ENCODE measurements at regions of chr11 and their contacts with region 1.

Region 1: GRCh38 chr11:7442588-7443215 is 42.6 kb upstream of the OLFML1 start:
- DNase-seq: peak; percentile 82
- H3K4me3 Mint-ChIP-seq: no peak overlapping the region
- H3K27ac Mint-ChIP-seq: no peak overlapping the region
- H3K4me1 Mint-ChIP-seq: no peaks in the 10 kb centered on the region
- H3K27me3 Mint-ChIP-seq: peaks cover 66% of the 10 kb centered on the region
- CTCF ChIP-seq: peak; percentile 59

Region 2: DNA sequence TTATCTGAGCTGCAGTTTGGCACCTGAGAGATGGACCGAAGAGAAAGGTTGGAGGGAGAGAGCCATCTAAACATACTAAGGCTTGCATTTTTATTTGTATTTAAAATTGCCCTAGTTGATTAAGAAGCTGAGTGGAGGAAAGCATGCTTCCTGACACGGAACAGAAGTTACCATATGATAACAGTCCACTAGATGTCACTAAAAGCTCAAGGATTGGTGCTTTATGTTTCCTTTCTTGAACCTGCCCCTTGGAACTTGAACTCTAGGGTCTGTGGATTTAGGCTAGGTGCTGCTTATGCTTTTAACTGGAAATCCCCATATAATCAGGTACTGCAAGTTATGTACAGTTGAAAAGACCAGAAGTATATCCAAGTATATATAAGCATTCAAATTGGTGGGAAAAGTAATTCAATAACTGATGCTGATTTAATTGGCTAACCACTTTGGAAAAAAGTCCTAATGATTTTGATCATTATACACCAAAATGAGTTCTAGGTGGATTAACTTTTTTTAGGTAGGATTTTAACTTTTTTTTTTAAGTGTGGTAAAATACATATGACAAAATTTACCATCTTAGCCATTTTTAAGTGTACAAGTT is 344.4 kb before region 1 on chr11:
- CTCF ChIA-PET with region 1: interaction called, 5 read pairs
- intact Hi-C with region 1: loop called (anchors 1 kb)
- DNase-seq: peak; percentile 9
- H3K4me3 Mint-ChIP-seq: no peak overlapping the region
- H3K27ac Mint-ChIP-seq: no peak overlapping the region
- H3K4me1 Mint-ChIP-seq: no peaks in the 10 kb centered on the region
- H3K27me3 Mint-ChIP-seq: peaks cover 52% of the 10 kb centered on the region
- CTCF ChIP-seq: peak; percentile 54

Region 3: DNA sequence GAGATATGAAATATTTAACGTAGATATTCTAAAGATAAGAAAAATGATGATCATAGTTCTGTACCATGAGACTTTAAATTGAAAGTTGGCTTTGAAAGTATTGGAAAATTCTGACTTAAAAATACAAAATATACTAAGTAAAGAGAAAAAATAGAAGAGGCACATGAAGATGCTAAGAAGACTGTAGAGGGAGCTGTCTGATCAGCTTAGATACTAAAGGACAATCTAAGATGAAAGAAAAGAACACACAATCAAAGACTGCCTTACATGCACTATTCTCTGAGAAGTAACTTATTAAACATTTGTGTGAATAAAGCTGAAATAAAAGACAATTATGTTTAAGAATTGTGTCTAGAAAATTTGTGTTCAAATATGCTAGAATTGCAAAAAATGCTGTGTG is 298.8 kb before region 1 on chr11:
- CTCF ChIA-PET with region 1: no interaction called
- intact Hi-C with region 1: loop called (anchors 2 kb)
- DNase-seq: no peak
- H3K4me3 Mint-ChIP-seq: no peak overlapping the region
- H3K27ac Mint-ChIP-seq: no peak overlapping the region
- H3K4me1 Mint-ChIP-seq: no peaks in the 10 kb centered on the region
- H3K27me3 Mint-ChIP-seq: peaks cover 20% of the 10 kb centered on the region
- CTCF ChIP-seq: no peak

Region 4: DNA sequence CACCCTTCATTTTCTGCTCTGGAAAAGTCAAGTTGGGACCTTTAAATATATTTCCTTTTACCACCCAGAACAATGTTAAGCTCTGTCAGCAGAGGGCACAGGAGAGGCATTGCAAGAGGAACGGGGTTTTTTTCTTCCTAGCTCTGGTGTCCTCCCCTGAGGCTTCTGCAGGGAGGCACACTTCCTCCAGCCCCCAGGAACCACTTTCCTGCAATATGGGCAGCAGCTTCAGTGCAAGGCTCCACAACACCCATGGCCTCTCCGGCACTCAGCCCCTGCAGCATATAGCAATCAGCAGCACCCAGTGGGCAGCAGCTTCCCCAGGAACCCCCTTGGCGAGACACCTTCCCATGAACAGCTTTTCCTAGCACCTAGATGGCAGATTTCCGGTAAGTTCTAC is 89.6 kb before region 1 on chr11:
- CTCF ChIA-PET with region 1: interaction called, 16 read pairs
- intact Hi-C with region 1: loop called (anchors 1 kb)
- DNase-seq: peak; percentile 49
- H3K4me3 Mint-ChIP-seq: no peak overlapping the region
- H3K27ac Mint-ChIP-seq: no peak overlapping the region
- H3K4me1 Mint-ChIP-seq: no peaks in the 10 kb centered on the region
- H3K27me3 Mint-ChIP-seq: peaks cover 61% of the 10 kb centered on the region
- CTCF ChIP-seq: peak; percentile 65

Region 5: GRCh38 chr11:7513234-7514098 is 70.8 kb after region 1 on chr11 and contains the start of gene PPFIBP2:
- CTCF ChIA-PET with region 1: no interaction called
- intact Hi-C with region 1: no loop called
- DNase-seq: peak; percentile 88
- H3K4me3 Mint-ChIP-seq: peak within 1 kb of the TSS; percentile 72
- H3K27ac Mint-ChIP-seq: no peak within 1 kb of the TSS
- H3K4me1 Mint-ChIP-seq: no peaks in the 10 kb centered on the region
- H3K27me3 Mint-ChIP-seq: peaks cover 56% of the 10 kb centered on the region
- CTCF ChIP-seq: peak; percentile 88
- total RNA-seq, gene PPFIBP2: 28.5 and 51.8 TPM in 2 replicates

Region 6: DNA sequence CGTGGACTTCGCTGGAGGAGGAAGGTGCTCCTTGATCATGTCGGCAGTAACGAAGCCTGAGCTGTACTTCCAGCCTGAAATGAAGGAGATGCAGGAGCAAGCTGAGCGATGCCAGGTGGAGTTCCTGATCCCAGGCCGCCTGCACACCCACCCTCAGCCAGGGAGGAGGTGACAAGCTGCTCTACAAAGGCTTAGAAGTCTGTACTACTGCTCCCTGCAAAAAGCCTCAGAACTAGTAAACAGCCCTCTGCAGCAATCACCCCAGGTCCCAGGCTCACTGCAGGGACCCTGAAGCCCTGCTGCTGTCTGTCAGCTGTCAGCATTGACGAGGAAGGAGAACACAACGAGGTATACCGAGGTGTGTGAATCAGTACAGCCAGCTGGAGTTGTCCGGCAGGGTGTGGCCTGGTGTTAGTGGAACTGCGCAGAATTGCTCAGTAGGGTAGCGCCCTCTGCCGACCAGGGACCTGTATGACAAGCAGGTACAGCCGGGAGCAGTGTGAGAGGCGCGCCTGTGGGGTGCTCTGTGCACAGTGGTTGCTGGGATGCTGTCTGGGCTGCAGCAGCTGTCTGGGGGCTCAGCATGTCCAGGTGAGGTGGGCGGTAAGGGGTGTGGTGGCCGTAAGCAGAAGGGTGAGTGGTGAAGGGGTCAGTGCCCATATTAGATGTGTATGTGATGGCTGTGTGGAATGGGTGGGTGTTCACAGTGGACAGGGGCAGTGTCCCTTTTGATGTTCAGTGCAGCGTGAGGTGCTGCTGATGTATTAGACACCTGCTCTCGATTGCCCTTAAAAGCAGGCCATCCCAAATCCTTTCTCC is 223.0 kb after region 1 on chr11:
- CTCF ChIA-PET with region 1: no interaction called
- intact Hi-C with region 1: loop called (anchors 10 kb)
- DNase-seq: peak; percentile 92
- H3K4me3 Mint-ChIP-seq: no peak overlapping the region
- H3K27ac Mint-ChIP-seq: no peak overlapping the region
- H3K4me1 Mint-ChIP-seq: peaks cover 16% of the 10 kb centered on the region
- H3K27me3 Mint-ChIP-seq: no peaks in the 10 kb centered on the region
- CTCF ChIP-seq: peak; percentile 79

Region 7: GRCh38 chr11:7694235-7694634 is 251.5 kb after region 1 on chr11:
- CTCF ChIA-PET with region 1: interaction called, 4 read pairs
- intact Hi-C with region 1: loop called (anchors 2 kb)
- DNase-seq: no peak
- H3K4me3 Mint-ChIP-seq: no peak overlapping the region
- H3K27ac Mint-ChIP-seq: no peak overlapping the region
- H3K4me1 Mint-ChIP-seq: no peaks in the 10 kb centered on the region
- H3K27me3 Mint-ChIP-seq: peaks cover 63% of the 10 kb centered on the region
- CTCF ChIP-seq: no peak